ENCODE measurements at regions of chr1 and their contacts with region 1.

Region 1: GRCh38 chr1:101431956-101432510 is 195.2 kb downstream of the S1PR1 start:
- DNase-seq: no peak
- CTCF ChIP-seq: no peak

Region 2: GRCh38 chr1:101309334-101310311 is 122.4 kb before region 1 on chr1:
- in situ Hi-C with region 1: loop called (anchors 5 kb)
- DNase-seq: peak; percentile 37
- CTCF ChIP-seq: peak; percentile 89

Region 3: DNA sequence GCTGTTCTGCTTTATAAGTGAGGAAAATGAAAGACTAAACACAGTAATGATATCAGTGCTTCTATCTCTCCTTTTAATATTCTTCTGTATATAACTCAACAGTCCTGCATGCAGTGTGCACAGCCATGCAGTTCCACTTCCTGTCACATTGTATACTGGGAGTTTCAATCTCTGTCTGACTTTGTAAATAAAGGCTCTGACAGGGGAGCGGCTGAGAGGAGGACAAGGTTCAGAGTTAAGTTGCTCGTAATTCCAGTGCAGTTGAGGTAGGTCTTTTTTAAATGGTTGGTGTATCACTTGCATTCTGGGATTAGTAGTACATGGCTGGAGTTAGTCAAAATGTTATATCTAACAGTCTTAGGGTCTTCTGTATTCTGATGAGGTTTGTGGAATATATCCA is 300.2 kb after region 1 on chr1:
- in situ Hi-C with region 1: no loop called
- DNase-seq: no peak
- CTCF ChIP-seq: no peak